Thyroid gland (tissue), 4 donors: ENCODE measurements at regions of chr4 and their contacts with region 1.

Region 1: DNA sequence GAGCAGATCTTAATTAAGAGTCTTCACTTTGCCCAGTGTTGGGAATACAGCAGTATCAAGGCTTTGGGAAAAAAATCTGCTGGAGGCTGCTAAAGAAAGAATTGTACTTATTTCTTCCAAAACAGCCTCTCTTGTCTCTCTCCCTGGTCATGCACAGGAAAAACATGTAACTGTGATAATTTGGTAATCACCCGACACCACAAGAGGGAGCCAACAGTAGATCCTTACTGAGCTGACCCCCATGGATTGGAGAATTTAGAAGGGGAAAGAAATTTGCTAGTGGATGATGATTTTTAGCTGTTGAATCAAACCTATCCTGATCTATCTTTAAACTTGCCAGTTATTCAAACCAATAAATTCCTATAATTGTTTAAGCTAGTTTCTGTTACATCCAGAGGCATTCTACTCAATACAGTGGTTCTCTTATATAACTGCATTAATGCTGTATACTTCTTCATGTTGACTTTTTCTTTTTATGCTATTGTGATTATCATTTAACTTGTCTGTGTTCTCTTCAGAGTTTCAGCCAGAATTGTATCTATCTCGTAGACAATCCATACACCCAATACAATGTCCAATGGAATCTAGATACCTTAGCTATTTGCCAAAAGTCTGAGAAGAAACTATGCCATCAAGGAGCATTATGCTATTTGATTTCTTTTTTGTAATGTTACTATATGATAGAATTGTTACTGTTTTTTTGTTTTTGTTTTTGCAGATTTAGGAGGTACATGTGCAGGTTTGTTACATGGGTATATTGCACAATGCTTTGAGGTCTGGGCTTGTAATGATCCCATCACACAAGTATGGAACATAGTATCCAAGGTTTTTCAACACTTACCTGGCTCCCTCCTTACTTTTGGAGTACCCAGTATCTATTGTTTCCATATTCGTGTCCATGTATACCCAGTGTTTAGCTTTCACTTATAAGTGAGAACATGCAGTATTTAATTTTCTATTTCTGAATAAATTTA is 31.3 kb upstream of the ARHGEF38 start:
- DNase-seq: peak; percentile 53 to 54
- H3K4me3 ChIP-seq: no peak overlapping the region
- H3K27ac ChIP-seq: no peak overlapping the region
- H3K4me1 ChIP-seq: no peaks in the 10 kb centered on the region
- H3K27me3 ChIP-seq: no peaks in the 10 kb centered on the region
- CTCF ChIP-seq: peak; percentile 30 to 85 (median 70)
- POLR2A ChIP-seq: no peak

Region 2: GRCh38 chr4:105714071-105714521 is 193.0 kb after region 1 on chr4:
- intact Hi-C with region 1: loop called (anchors 5 kb)
- DNase-seq: no peak
- H3K4me3 ChIP-seq: no peak overlapping the region
- H3K27ac ChIP-seq: no peak overlapping the region
- H3K4me1 ChIP-seq: peaks cover 0 to 3% of the 10 kb centered on the region in 2 donors
- H3K27me3 ChIP-seq: no peaks in the 10 kb centered on the region
- CTCF ChIP-seq: no peak
- POLR2A ChIP-seq: no peak